Right ventricle myocardium inferior (tissue), 1 donor: ENCODE measurements at regions of chr1 and their contacts with region 1.

Region 1: DNA sequence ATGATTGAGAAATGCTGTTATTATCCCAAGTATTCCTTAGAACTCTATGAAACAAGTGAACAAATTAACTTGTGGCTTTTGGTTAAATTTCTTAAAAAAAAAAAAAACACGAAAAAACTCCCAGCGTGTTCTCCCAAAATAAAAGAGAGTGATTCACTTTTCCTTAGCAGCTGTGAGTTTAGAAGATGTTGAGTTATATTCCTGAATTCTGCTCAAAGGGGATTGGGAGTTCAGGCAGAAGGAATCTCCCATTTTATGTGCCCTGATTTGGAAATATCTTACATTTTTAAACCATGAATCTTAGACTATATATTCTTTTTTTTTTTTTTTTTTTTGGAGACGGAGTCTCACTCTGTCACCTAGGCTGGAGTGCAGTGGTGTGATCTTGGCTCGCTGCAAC is 34.3 kb downstream of the SMG7 start:
- DNase-seq: no peak
- ATAC-seq: no peak

Region 2: DNA sequence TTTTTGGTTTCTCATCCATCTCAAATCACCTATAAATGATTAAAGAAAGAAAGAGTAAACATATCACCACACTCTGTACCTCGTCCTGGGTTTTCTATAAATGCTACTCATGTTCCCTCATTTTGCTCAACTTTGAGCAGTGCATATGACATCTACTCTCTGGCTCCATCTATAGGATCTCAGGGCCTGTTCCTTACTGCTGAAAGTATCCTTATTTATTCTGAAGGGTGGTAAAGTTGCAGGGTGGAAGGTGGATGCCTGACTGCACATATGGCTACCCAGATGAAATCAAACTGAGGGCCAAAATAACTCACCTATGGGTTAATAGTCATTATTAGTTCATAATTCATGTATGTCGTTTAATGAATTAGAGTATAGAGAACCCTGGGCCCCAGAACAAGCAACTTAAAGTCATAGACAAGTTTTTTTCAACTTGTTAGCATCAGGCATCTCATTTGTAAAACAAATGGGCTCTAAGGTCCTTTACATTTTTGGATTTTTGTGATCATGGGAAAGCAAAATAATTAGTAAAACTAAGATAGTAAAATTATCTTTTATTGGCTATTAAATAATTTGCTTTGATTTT is 37.2 kb after region 1 on chr1:
- intact Hi-C with region 1: loop called (anchors 5 kb)
- DNase-seq: no peak
- ATAC-seq: peak; percentile 84